T-cell (primary cell): ENCODE measurements at regions of chr6 and their contacts with region 1.

Region 1: DNA sequence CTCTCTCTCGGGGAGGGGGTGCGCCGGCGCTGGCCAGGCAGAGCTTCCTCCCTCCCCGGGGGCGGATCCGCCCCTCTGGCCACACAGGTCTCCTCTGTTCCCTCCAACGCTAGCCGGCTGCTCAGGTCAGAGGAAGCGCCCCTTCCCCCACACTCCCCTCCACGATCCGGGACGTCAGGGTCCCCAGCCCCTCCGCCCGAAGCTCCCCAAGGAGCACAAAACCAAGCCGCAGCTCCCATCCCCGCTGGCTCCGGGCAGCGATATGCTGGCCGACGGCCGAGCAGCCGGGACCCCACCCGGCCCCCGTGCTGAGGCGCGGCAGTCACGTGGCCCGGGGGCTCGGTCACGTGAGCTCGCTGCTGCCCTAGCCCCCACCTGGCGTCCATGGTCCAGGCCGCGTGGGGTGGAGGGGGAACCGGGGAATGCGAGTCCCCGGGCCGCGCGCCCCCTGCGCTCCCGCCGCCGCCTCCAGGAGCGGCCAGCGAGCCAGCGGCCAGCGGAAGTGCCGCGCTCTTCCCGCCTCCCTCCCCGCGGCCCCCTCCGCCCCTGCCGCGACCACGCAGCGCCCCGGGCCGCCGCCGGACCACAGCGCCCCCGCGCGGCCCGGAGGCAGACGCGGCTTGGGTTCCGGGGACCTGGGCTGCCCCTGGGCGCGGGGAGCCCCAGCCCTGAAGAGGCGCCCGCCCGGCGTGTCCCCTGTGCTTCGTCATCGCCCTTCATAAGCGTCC is at the start of gene SLC35B2:
- DNase-seq: peak in 33 of 35 experiments; percentile 32 to 85 (median 52)
- ATAC-seq: peak; percentile 74 to 86 (median 84)
- H3K4me3 ChIP-seq: peak within 1 kb of the TSS; percentile 73 to 75
- H3K4me3 Mint-ChIP-seq: peak within 1 kb of the TSS; percentile 85 to 90 (median 86)
- H3K27ac ChIP-seq: peak within 1 kb of the TSS; percentile 71
- H3K27ac Mint-ChIP-seq: peak within 1 kb of the TSS; percentile 93 to 94
- H3K4me1 ChIP-seq: peaks cover 5 to 45% of the 10 kb centered on the region in 2 experiments
- H3K4me1 Mint-ChIP-seq: peaks cover 49 to 70% (median 61%) of the 10 kb centered on the region in 3 donors
- H3K27me3 ChIP-seq: no peaks in the 10 kb centered on the region
- H3K27me3 Mint-ChIP-seq: no peaks in the 10 kb centered on the region
- total RNA-seq, gene SLC35B2: 14.6 to 21.8 (median 20.3) TPM

Region 2: DNA sequence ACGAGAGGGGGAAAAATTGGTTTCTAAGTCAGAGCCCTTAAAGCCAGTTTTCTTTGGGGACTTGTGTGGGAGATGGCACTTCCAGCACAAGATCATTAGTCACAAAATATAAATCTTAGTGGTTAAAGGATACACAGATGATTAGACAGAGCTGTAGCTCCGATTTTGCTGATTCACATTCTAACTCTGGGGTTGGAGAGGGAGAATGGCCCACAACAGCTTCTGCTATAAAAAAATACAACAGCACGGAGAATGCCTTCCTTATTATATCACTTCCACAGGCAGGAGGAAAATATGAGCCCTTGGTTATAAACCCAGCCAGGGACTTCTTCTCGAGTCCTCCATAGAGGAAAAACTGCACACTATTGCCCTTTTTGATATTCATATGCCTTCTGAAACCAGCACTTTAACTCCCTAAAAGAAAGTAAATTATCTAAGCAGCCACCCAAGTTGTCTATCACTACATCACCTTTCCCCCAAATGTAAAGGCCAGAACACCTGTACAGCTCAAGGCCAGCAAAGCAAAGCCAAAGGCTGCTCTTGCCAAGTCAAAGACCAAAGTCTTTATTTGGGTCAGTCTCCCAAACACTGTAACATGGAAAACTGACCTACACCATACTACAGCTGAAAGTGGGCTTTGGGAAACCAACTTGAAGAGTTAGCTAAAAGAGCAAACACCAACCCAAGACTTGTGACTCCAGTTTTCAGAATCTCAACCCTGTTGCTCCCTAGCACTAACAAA is 140.4 kb before region 1 on chr6:
- CTCF ChIA-PET with region 1: no interaction called
- POLR2A ChIA-PET with region 1: no interaction called
- DNase-seq: no peak
- ATAC-seq: no peak
- H3K4me3 ChIP-seq: no peak overlapping the region
- H3K4me3 Mint-ChIP-seq: no peak overlapping the region
- H3K27ac ChIP-seq: no peak overlapping the region
- H3K27ac Mint-ChIP-seq: peak overlapping the region; percentile 11 to 31
- H3K4me1 ChIP-seq: peaks cover 6 to 24% of the 10 kb centered on the region in 2 experiments
- H3K4me1 Mint-ChIP-seq: peaks cover 46 to 57% (median 52%) of the 10 kb centered on the region in 3 donors
- H3K27me3 ChIP-seq: no peaks in the 10 kb centered on the region
- H3K27me3 Mint-ChIP-seq: no peaks in the 10 kb centered on the region

Region 3: GRCh38 chr6:44128020-44128917 is 128.9 kb before region 1 on chr6:
- CTCF ChIA-PET with region 1: no interaction called
- POLR2A ChIA-PET with region 1: interaction called in 1 of 2 experiments, 11 read pairs
- DNase-seq: peak in 8 of 35 experiments; percentile 7 to 29 (median 16)
- ATAC-seq: no peak
- H3K4me3 ChIP-seq: peak overlapping the region; percentile 84 to 86
- H3K4me3 Mint-ChIP-seq: peak overlapping the region; percentile 71 to 97 (median 76)
- H3K27ac ChIP-seq: no peak overlapping the region
- H3K27ac Mint-ChIP-seq: peak overlapping the region in 1 of 2 donors; percentile 39
- H3K4me1 ChIP-seq: peaks cover 27 to 43% of the 10 kb centered on the region in 2 experiments
- H3K4me1 Mint-ChIP-seq: peaks cover 60 to 64% (median 60%) of the 10 kb centered on the region in 3 donors
- H3K27me3 ChIP-seq: no peaks in the 10 kb centered on the region
- H3K27me3 Mint-ChIP-seq: no peaks in the 10 kb centered on the region

Region 4: GRCh38 chr6:44223319-44224028 is 33.7 kb before region 1 on chr6 and contains the start of gene SLC29A1:
- CTCF ChIA-PET with region 1: interaction called in 1 of 2 experiments, 15 read pairs
- POLR2A ChIA-PET with region 1: interaction called in 1 of 2 experiments, 4 read pairs
- DNase-seq: peak; percentile 68 to 89 (median 81)
- ATAC-seq: peak; percentile 83 to 90 (median 87)
- H3K4me3 ChIP-seq: peak within 1 kb of the TSS; percentile 53 to 69
- H3K4me3 Mint-ChIP-seq: peak within 1 kb of the TSS; percentile 75 to 88 (median 79)
- H3K27ac ChIP-seq: no peak within 1 kb of the TSS
- H3K27ac Mint-ChIP-seq: peak within 1 kb of the TSS; percentile 39 to 57
- H3K4me1 ChIP-seq: peaks cover 9 to 40% of the 10 kb centered on the region in 2 experiments
- H3K4me1 Mint-ChIP-seq: peaks cover 21 to 38% (median 25%) of the 10 kb centered on the region in 3 donors
- H3K27me3 ChIP-seq: peaks cover 0 to 31% of the 10 kb centered on the region in 2 experiments
- H3K27me3 Mint-ChIP-seq: peaks cover 0 to 7% of the 10 kb centered on the region in 2 donors
- total RNA-seq, gene SLC29A1: 1.3 to 8.0 (median 3.4) TPM

Region 5: GRCh38 chr6:44246663-44247337 is 10.4 kb before region 1 on chr6 and contains the start of gene HSP90AB1:
- CTCF ChIA-PET with region 1: interaction called, 9 read pairs
- POLR2A ChIA-PET with region 1: interaction called, 7 to 28 read pairs
- DNase-seq: peak; percentile 86 to 98 (median 95)
- ATAC-seq: peak; percentile 78 to 83 (median 81)
- H3K4me3 ChIP-seq: peak within 1 kb of the TSS; percentile 69 to 99
- H3K4me3 Mint-ChIP-seq: peak within 1 kb of the TSS; percentile 94 to 99 (median 98)
- H3K27ac ChIP-seq: peak within 1 kb of the TSS; percentile 95
- H3K27ac Mint-ChIP-seq: peak within 1 kb of the TSS; percentile 98 to 99
- H3K4me1 ChIP-seq: peaks cover 9 to 26% of the 10 kb centered on the region in 2 experiments
- H3K4me1 Mint-ChIP-seq: peaks cover 44 to 54% (median 45%) of the 10 kb centered on the region in 3 donors
- H3K27me3 ChIP-seq: no peaks in the 10 kb centered on the region
- H3K27me3 Mint-ChIP-seq: no peaks in the 10 kb centered on the region
- total RNA-seq, gene HSP90AB1: 394 to 454 (median 404) TPM